Activated CD8-positive, alpha-beta T cell treated with anti-CD3 and anti-CD28 coated beads for 36 hours (primary cell): ENCODE measurements at regions of chr9 and their contacts with region 1.

Region 1: DNA sequence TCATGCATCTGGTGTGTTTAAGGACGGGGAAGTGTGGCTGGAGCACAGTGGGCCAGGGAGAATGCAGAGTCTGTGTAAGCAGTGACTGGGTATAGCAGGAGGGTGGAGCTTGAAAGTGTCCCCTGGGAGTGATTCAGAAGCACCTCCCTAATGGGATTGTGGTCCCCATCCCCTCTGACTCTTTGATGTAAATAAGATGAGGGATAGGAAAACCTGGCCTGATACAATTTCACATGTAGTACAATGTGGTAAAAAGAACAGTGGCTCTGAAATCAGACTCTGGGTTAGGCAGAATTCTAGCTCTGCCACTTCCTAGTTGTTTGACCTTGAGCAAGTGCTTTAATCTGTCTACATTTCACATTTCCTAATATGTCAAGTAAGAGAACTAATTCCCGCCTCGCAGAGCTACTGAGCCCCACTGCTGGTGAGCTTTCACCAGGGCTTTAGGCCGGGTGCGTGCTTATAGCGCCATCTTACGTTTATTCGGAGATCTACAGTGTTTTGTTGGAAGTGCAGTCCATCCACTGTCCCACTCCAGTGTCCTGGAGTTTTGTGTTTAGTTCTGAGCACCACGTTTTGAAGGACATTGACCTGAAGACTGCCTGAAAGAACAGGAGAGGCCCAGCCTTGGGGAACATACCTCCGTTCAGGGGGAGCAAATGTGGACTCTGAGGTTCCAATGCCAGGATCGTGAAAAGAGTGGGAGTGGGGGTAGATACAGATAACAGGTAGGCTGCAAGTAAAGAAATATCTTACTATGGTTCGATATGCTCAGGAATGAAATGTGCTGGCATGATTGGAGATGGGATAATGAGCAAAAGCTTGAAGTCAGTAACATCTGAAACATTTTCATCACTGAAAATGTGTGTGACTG is 51.2 kb upstream of the TESK1 start:
- DNase-seq: peak; percentile 63
- ATAC-seq: peak; percentile 96
- H3K4me3 Mint-ChIP-seq: no peak overlapping the region
- H3K27ac Mint-ChIP-seq: no peak overlapping the region
- H3K4me1 Mint-ChIP-seq: no peaks in the 10 kb centered on the region
- H3K27me3 Mint-ChIP-seq: no peaks in the 10 kb centered on the region
- CTCF ChIP-seq: peak; percentile 80

Region 2: GRCh38 chr9:35452481-35452880 is 101.4 kb before region 1 on chr9:
- CTCF ChIA-PET with region 1: interaction called, 10 read pairs
- POLR2A ChIA-PET with region 1: no interaction called
- intact Hi-C with region 1: no loop called
- DNase-seq: no peak
- ATAC-seq: no peak
- H3K4me3 Mint-ChIP-seq: no peak overlapping the region
- H3K27ac Mint-ChIP-seq: no peak overlapping the region
- H3K4me1 Mint-ChIP-seq: no peaks in the 10 kb centered on the region
- H3K27me3 Mint-ChIP-seq: peaks cover 18% of the 10 kb centered on the region
- CTCF ChIP-seq: no peak

Region 3: GRCh38 chr9:35487081-35487480 is 66.8 kb before region 1 on chr9:
- CTCF ChIA-PET with region 1: interaction called, 11 read pairs
- POLR2A ChIA-PET with region 1: no interaction called
- intact Hi-C with region 1: no loop called
- DNase-seq: no peak
- ATAC-seq: no peak
- H3K4me3 Mint-ChIP-seq: no peak overlapping the region
- H3K27ac Mint-ChIP-seq: no peak overlapping the region
- H3K4me1 Mint-ChIP-seq: peaks cover 16% of the 10 kb centered on the region
- H3K27me3 Mint-ChIP-seq: peaks cover 17% of the 10 kb centered on the region
- CTCF ChIP-seq: no peak

Region 4: GRCh38 chr9:35529161-35529823 is 24.6 kb before region 1 on chr9:
- CTCF ChIA-PET with region 1: interaction called, 14 read pairs
- POLR2A ChIA-PET with region 1: no interaction called
- intact Hi-C with region 1: no loop called
- DNase-seq: no peak
- ATAC-seq: no peak
- H3K4me3 Mint-ChIP-seq: no peak overlapping the region
- H3K27ac Mint-ChIP-seq: no peak overlapping the region
- H3K4me1 Mint-ChIP-seq: no peaks in the 10 kb centered on the region
- H3K27me3 Mint-ChIP-seq: no peaks in the 10 kb centered on the region
- CTCF ChIP-seq: no peak

Region 5: GRCh38 chr9:35569206-35569605 is 15.3 kb after region 1 on chr9:
- CTCF ChIA-PET with region 1: interaction called, 19 read pairs
- POLR2A ChIA-PET with region 1: no interaction called
- intact Hi-C with region 1: no loop called
- DNase-seq: no peak
- ATAC-seq: no peak
- H3K4me3 Mint-ChIP-seq: no peak overlapping the region
- H3K27ac Mint-ChIP-seq: peak overlapping the region; percentile 98
- H3K4me1 Mint-ChIP-seq: peaks cover 38% of the 10 kb centered on the region
- H3K27me3 Mint-ChIP-seq: no peaks in the 10 kb centered on the region
- CTCF ChIP-seq: no peak